HEK293T (cell line): ENCODE measurements at regions of chr7 and their contacts with region 1.

Region 1: GRCh38 chr7:142030294-142030693 is 34.6 kb downstream of the MGAM start:
- DNase-seq: no peak

Region 2: GRCh38 chr7:141975806-141976523 is 54.3 kb before region 1 on chr7:
- CTCF ChIA-PET with region 1: interaction called, 19 read pairs
- POLR2A ChIA-PET with region 1: no interaction called
- DNase-seq: peak; percentile 87

Region 3: GRCh38 chr7:142017451-142017850 is 12.8 kb before region 1 on chr7:
- CTCF ChIA-PET with region 1: no interaction called
- POLR2A ChIA-PET with region 1: no interaction called
- DNase-seq: no peak